Heart left ventricle (tissue), 16 donors: ENCODE measurements at regions of chr11 and their contacts with region 1.

Region 1: DNA sequence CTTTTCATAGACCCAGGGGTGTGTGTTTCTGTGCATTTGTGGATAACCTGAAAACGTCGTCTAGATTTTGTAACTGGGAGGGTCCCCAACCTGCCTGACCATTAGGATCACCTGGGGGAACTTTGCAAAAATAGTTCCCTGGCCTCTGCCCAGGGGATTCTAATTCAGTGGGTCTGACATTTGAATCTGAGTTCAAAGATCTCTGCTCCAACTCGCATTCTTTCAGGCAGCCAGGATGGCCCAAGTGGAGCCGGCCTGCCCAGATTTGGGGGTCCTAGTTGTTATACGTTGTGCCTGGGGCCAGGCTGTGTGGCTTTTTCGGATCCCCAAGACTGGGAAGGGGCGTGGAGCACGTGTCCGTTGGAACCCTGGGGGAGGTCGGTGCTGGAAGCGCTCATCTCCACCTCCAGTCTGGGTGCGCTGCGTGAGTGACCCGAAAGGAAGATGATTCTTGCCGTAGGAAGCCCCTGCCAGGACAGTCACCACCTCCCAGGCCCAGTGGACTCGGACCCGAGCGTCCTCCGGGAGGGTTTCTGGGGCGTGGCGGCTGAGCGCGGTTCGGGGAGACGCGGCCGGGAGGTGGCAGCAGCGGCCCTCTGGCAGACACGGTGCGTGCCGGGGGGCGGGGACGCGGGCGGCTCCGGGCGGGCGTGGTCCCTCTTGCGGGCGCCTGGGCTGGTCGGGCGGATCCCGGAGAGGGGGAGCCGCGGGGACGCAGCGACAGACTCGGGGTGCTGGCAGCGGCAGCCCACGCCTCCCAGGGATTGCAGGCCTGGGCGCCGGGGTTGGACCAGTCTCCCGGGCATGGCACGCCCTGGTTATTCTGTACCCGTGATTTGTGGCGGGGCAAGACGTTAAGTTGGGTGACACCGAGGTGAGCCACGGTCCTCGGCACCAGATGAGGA is 29.2 kb upstream of the PLET1 start:
- DNase-seq: peak; percentile 83 to 93 (median 88)
- ATAC-seq: peak; percentile 60 to 90 (median 87)
- H3K4me3 ChIP-seq: peak overlapping the region; percentile 49 to 89 (median 62)
- H3K27ac ChIP-seq: peak overlapping the region; percentile 24 to 91 (median 80)
- H3K4me1 ChIP-seq: peaks cover 0 to 44% (median 16%) of the 10 kb centered on the region in 12 donors
- H3K27me3 ChIP-seq: no peaks in the 10 kb centered on the region
- CTCF ChIP-seq: peak; percentile 66 to 96 (median 87)
- POLR2A ChIP-seq: peak in 1 of 2 donors; percentile 66

Region 2: GRCh38 chr11:112459001-112459400 is 169.2 kb after region 1 on chr11:
- intact Hi-C with region 1: loop called in 6 of 10 experiments (anchors 2 to 10 kb)
- DNase-seq: no peak
- ATAC-seq: no peak
- H3K4me3 ChIP-seq: no peak overlapping the region
- H3K27ac ChIP-seq: no peak overlapping the region
- H3K4me1 ChIP-seq: peaks cover 0 to 2% (median 0%) of the 10 kb centered on the region in 12 donors
- H3K27me3 ChIP-seq: no peaks in the 10 kb centered on the region
- CTCF ChIP-seq: no peak
- POLR2A ChIP-seq: no peak

Region 3: DNA sequence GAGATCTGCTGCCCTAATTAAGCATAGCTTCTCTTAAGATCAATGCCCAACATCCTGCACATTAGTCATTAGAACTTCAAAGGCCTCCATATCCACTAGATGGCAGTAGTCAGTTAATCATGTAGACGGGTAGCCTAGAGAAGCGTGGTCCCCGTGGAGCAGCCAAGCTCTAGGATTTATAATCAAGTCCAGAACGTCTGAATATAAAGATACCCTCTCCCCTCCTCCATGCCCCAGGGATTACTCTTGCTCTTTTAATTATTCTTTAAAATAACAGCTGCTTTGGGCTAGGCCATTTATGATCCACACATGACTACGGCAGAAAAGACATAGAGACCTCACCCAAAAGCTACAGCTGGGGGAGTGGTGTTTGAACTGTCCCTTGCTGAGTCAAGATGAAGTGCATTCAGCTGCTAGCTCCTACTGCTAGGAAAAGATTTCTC is 298.4 kb after region 1 on chr11:
- intact Hi-C with region 1: loop called in 4 of 10 experiments (anchors 2 to 10 kb)
- DNase-seq: peak; percentile 57 to 76 (median 66)
- ATAC-seq: peak; percentile 58 to 88 (median 82)
- H3K4me3 ChIP-seq: no peak overlapping the region
- H3K27ac ChIP-seq: peak overlapping the region in 1 of 12 donors; percentile 44
- H3K4me1 ChIP-seq: peaks cover 0 to 6% (median 1%) of the 10 kb centered on the region in 12 donors
- H3K27me3 ChIP-seq: no peaks in the 10 kb centered on the region
- CTCF ChIP-seq: peak; percentile 64 to 86 (median 74)
- POLR2A ChIP-seq: no peak

Region 4: GRCh38 chr11:112784323-112785073 is 494.7 kb after region 1 on chr11:
- intact Hi-C with region 1: loop called in 2 of 10 experiments (anchors 10 kb)
- DNase-seq: peak; percentile 68 to 91 (median 85)
- ATAC-seq: peak; percentile 63 to 83 (median 73)
- H3K4me3 ChIP-seq: peak overlapping the region in 9 of 12 donors; percentile 1 to 40 (median 27)
- H3K27ac ChIP-seq: peak overlapping the region; percentile 7 to 75 (median 56)
- H3K4me1 ChIP-seq: peaks cover 0 to 56% (median 34%) of the 10 kb centered on the region in 12 donors
- H3K27me3 ChIP-seq: no peaks in the 10 kb centered on the region
- CTCF ChIP-seq: peak in 2 of 12 donors; percentile 12 to 15
- POLR2A ChIP-seq: no peak

Region 5: DNA sequence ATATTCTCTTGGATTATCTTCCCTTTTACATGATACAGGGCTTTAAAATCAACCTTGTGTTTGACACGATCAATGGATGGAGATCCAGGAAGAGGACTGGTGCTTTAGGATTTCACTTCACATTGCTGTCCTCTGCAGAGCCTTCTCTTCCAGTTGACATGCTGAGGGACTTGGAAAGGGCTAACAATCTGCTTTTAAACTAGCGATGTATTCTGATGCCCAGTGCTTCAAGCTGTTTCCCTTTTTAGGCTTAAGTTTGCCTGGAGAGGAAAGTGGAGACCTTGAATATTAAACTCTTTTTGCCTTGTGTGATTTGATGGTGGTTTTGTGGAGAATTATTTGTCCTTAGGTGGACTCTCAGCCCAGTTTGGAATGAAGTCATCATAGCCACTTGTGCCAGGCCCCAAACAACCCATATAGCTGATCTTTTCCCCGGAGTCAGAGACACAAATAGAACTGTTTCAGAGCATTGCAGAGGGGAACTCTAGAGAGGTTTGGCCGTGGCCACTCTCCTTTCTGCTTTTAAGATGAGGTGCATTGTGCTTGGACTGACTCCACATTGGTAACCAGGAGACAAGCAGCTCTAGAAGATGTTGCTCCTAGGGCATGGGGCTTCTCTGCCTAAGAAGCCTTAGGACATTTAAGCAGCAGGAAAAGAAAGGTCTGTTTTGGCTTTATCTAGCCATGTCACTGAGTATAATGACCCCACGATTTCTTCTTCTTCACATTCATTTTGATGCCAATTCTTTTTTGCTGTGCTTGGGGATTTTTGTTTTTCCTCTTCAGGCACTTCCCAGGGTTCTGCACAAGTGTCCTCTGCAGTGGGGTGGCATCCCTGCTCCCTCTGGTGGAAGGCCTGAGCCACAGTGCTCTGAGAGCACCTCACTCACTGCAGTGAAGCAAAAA is 824.2 kb after region 1 on chr11:
- intact Hi-C with region 1: loop called in 2 of 10 experiments (anchors 10 kb)
- DNase-seq: peak; percentile 49 to 67 (median 64)
- ATAC-seq: peak; percentile 89 to 94 (median 91)
- H3K4me3 ChIP-seq: no peak overlapping the region
- H3K27ac ChIP-seq: peak overlapping the region in 9 of 12 donors; percentile 41 to 79 (median 62)
- H3K4me1 ChIP-seq: peaks cover 0 to 58% (median 21%) of the 10 kb centered on the region in 12 donors
- H3K27me3 ChIP-seq: no peaks in the 10 kb centered on the region
- CTCF ChIP-seq: peak; percentile 32 to 77 (median 65)
- POLR2A ChIP-seq: no peak

Region 6: DNA sequence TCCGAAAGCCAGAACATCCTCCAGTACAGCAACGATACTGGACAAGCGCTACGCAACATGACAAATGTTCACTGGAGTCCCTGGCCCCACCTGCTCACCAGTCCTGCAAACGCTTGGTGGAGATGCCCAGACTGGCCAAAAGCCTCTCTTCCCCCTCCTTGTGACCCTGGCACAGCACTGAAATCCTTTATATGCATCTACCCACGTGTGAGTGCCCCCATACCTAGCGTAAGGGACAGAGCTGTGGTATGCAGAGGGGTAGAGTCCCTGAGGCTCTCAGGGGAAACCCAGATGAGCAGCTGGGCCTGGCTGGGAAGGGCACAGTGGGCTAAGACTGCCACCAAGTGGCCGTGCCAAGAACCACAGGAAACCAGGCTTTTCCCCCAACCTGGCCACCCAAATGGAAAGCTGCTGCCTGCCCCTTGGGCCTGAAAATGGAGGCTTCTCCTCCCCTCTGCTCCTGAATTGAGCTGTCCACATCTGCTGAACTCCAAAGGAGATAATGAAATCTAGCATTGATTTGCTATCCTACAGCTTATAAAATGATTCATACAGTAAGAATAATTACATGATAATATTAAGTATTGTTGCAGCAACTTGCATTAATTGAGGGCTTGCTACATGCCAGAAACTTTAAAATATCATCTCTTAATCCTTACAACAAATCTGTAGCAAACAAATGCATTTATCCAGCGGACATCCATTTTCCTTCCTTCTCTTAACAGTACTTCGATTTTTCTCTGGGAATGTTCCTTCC is 999.8 kb after region 1 on chr11:
- intact Hi-C with region 1: loop called (anchors 2 to 10 kb)
- DNase-seq: peak; percentile 42 to 77 (median 54)
- ATAC-seq: peak; percentile 73 to 79 (median 77)
- H3K4me3 ChIP-seq: no peak overlapping the region
- H3K27ac ChIP-seq: no peak overlapping the region
- H3K4me1 ChIP-seq: peaks cover 0 to 9% (median 0%) of the 10 kb centered on the region in 12 donors
- H3K27me3 ChIP-seq: peaks cover 0 to 8% (median 0%) of the 10 kb centered on the region in 9 donors
- CTCF ChIP-seq: peak; percentile 79 to 93 (median 88)
- POLR2A ChIP-seq: no peak